Activated CD4-positive, alpha-beta T cell treated with anti-CD3 and anti-CD28 coated beads, Interleukin-2, amount 10 ng/mL, durations not matched to agents 7 days and 5 days (primary cell): ENCODE measurements at regions of chr16 and their contacts with region 1.

Region 1: GRCh38 chr16:11218604-11218962 is 37.4 kb downstream of the SOCS1 start:
- DNase-seq: no peak
- H3K4me3 Mint-ChIP-seq: no peak overlapping the region
- H3K27ac Mint-ChIP-seq: no peak overlapping the region
- H3K4me1 Mint-ChIP-seq: peaks cover 43% of the 10 kb centered on the region
- H3K27me3 Mint-ChIP-seq: no peaks in the 10 kb centered on the region

Region 2: GRCh38 chr16:11201498-11202259 is 16.9 kb before region 1 on chr16:
- CTCF ChIA-PET with region 1: interaction called, 15 read pairs
- POLR2A ChIA-PET with region 1: no interaction called
- DNase-seq: no peak
- H3K4me3 Mint-ChIP-seq: no peak overlapping the region
- H3K27ac Mint-ChIP-seq: no peak overlapping the region
- H3K4me1 Mint-ChIP-seq: peaks cover 58% of the 10 kb centered on the region
- H3K27me3 Mint-ChIP-seq: no peaks in the 10 kb centered on the region